Ascending aorta (tissue), 2 donors: ENCODE measurements at regions of chr3 and their contacts with region 1.

Region 1: GRCh38 chr3:44761424-44762169 is at the starts of genes KIAA1143 and KIF15:
- DNase-seq: peak; percentile 81 to 97
- H3K4me3 ChIP-seq: peak within 1 kb of the TSS; percentile 59 to 87
- H3K27ac ChIP-seq: peak within 1 kb of the TSS; percentile 7 to 56
- H3K4me1 ChIP-seq: peaks cover 0 to 5% of the 10 kb centered on the region in 2 donors
- H3K27me3 ChIP-seq: no peaks in the 10 kb centered on the region
- CTCF ChIP-seq: no peak
- total RNA-seq, gene KIAA1143: 12.0 TPM
- total RNA-seq, gene KIF15: 0.64 TPM

Region 2: GRCh38 chr3:44712455-44713075 is 49.0 kb before region 1 on chr3 and contains the start of gene ZNF502:
- intact Hi-C with region 1: loop called (anchors 5 kb)
- DNase-seq: peak; percentile 21 to 90
- H3K4me3 ChIP-seq: peak within 1 kb of the TSS; percentile 63 to 87
- H3K27ac ChIP-seq: peak within 1 kb of the TSS; percentile 65 to 67
- H3K4me1 ChIP-seq: no peaks in the 10 kb centered on the region
- H3K27me3 ChIP-seq: no peaks in the 10 kb centered on the region
- CTCF ChIP-seq: peak in 2 of 3 experiments; percentile 22 to 32
- total RNA-seq, gene ZNF502: 6.5 TPM

Region 3: GRCh38 chr3:44729384-44729910 is 32.1 kb before region 1 on chr3 and contains the start of gene ZNF501:
- intact Hi-C with region 1: loop called (anchors 2 kb)
- DNase-seq: peak; percentile 63 to 96
- H3K4me3 ChIP-seq: peak within 1 kb of the TSS; percentile 55 to 69
- H3K27ac ChIP-seq: peak within 1 kb of the TSS; percentile 29 to 47
- H3K4me1 ChIP-seq: no peaks in the 10 kb centered on the region
- H3K27me3 ChIP-seq: no peaks in the 10 kb centered on the region
- CTCF ChIP-seq: no peak
- total RNA-seq, gene ZNF501: not detected

Region 4: DNA sequence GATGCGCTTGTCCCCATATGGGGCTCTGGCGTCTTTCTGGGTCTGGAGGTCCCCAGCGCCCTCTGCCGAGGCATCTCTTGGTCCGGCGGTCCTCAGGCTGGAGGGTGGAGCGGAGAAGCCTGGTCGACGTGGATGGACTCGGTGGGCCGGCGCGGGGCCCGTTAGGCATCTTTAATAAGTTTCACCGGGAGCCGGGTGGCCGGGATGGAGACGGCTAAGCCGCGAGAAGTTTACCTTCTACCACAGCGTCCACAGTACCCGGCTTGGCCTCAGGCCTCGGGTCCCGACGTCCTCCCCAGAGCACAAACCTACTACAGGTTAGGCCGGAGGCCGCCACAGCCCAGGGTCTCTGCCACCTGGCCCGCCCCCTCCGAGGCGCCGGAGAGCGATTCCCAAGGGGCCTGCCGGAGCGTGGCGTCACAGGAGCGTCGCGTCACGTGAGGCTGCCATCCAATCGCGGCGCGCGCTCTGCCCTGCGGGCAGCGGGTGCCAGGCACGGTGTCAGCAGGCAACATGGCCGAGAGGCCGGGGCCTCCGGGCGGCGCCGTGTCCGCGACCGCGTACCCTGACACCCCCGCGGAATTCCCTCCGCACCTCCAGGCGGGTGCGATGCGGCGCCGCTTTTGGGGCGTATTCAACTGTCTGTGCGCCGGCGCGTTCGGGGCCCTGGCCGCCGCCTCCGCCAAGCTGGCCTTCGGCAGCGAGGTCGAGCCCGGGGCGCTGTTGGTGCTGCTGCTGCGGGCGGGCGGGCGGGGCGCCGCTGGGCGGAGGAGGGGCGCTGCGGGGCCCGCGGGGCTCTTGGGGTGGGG is 100.0 kb after region 1 on chr3 and contains the start of gene TMEM42:
- intact Hi-C with region 1: loop called (anchors 1 kb)
- DNase-seq: peak; percentile 55 to 95
- H3K4me3 ChIP-seq: peak within 1 kb of the TSS; percentile 67 to 89
- H3K27ac ChIP-seq: peak within 1 kb of the TSS; percentile 91 to 96
- H3K4me1 ChIP-seq: peaks cover 0 to 11% of the 10 kb centered on the region in 2 donors
- H3K27me3 ChIP-seq: no peaks in the 10 kb centered on the region
- CTCF ChIP-seq: peak in 2 of 3 experiments; percentile 4 to 40
- total RNA-seq, gene TMEM42: not detected